Ovary (tissue), 10 donors: ENCODE measurements at regions of chr4 and their contacts with region 1.

Region 1: GRCh38 chr4:134883831-134884449 is 682.4 kb upstream of the PABPC4L start:
- DNase-seq: no peak
- H3K4me3 ChIP-seq: no peak overlapping the region
- H3K27ac ChIP-seq: no peak overlapping the region
- H3K4me1 ChIP-seq: no peaks in the 10 kb centered on the region
- H3K27me3 ChIP-seq: no peaks in the 10 kb centered on the region
- CTCF ChIP-seq: no peak
- EP300 ChIP-seq: no peak
- POLR2A ChIP-seq: no peak

Region 2: DNA sequence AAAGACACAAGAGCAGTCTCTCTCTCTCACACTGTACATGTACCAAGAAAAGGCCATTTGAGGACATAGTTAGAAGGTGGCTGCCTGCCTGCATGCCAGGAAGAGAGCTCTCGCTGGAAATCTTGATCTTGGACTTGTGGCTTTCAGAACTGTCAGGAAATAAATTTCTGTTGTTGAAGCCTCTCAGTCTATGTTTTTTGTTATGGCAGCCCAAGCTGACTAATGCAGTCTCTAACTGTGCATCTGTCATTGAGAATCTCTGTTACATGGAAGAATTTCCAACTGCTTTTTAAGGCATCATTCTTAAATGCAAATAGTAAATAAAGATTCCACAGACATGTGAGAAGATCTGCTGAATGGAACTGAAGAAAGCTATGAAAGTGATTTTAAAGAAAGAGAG is 1536.5 kb before region 1 on chr4:
- intact Hi-C with region 1: loop called in 1 of 4 experiments (anchors 10 kb)
- DNase-seq: no peak
- H3K4me3 ChIP-seq: no peak overlapping the region
- H3K27ac ChIP-seq: no peak overlapping the region
- H3K4me1 ChIP-seq: no peaks in the 10 kb centered on the region
- H3K27me3 ChIP-seq: no peaks in the 10 kb centered on the region
- CTCF ChIP-seq: no peak
- EP300 ChIP-seq: no peak
- POLR2A ChIP-seq: no peak